Adrenal gland (tissue), 19 donors: ENCODE measurements at regions of chr17 and their contacts with region 1.

Region 1: DNA sequence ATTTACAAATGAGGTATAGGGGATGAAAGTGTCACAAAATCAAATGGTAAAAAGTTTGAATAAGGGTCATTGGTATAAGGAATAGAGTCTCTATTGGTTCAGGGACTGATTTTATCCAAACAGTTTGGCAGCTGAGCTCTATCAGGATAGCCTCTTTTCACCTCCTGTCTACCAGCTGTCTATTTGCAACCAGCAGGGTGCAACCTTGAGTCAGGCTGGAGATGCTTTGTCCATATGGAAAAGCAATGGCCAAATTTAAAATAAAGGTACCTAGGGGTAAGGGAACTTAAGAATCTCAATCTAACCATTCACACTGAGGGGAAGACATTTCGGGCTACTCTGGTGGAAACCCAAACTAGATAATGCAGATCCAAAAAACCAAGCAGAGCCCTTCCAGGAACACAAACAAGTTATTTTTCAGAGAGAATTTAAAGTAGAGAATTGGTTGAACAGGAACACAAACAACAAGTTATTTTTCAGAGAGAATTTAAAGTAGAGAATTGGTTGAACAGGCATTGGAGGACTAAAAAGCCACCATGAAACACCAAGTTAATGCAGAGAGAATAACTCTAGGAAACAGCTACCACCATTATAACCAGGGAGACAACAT is 12.6 kb upstream of the CA10 start:
- DNase-seq: peak; percentile 21 to 74 (median 44)
- H3K4me3 ChIP-seq: no peak overlapping the region
- H3K27ac ChIP-seq: no peak overlapping the region
- H3K4me1 ChIP-seq: no peaks in the 10 kb centered on the region
- H3K27me3 ChIP-seq: no peaks in the 10 kb centered on the region
- CTCF ChIP-seq: peak; percentile 47 to 67 (median 60)
- POLR2A ChIP-seq: no peak

Region 2: GRCh38 chr17:51640108-51640622 is 530.9 kb before region 1 on chr17:
- intact Hi-C with region 1: no loop called
- DNase-seq: peak in 1 of 7 donors; percentile 2
- H3K4me3 ChIP-seq: no peak overlapping the region
- H3K27ac ChIP-seq: no peak overlapping the region
- H3K4me1 ChIP-seq: no peaks in the 10 kb centered on the region
- H3K27me3 ChIP-seq: no peaks in the 10 kb centered on the region
- CTCF ChIP-seq: peak in 2 of 6 experiments; percentile 20 to 23
- POLR2A ChIP-seq: no peak

Region 3: DNA sequence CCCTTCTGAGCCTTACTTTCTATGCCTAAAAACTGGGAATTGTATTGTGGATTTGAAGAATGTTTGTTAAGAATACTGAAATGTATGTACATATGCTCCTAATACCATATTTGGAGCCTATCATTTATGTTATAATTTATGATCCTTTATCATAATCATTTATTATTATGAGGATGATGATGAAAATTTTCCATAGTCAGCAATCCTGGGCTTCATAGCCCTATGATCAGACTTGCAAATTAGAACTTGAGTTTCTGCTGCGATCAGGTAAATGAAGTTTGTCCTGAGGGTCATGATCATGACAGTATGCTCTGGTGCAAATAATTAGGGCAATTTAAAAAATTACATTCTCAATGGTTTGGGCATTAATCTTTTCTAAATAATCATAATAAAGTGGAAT is 160.0 kb before region 1 on chr17:
- intact Hi-C with region 1: no loop called
- DNase-seq: no peak
- H3K4me3 ChIP-seq: no peak overlapping the region
- H3K27ac ChIP-seq: no peak overlapping the region
- H3K4me1 ChIP-seq: no peaks in the 10 kb centered on the region
- H3K27me3 ChIP-seq: no peaks in the 10 kb centered on the region
- CTCF ChIP-seq: no peak
- POLR2A ChIP-seq: no peak

Region 4: GRCh38 chr17:52136166-52136565 is 34.9 kb before region 1 on chr17:
- intact Hi-C with region 1: no loop called
- DNase-seq: no peak
- H3K4me3 ChIP-seq: no peak overlapping the region
- H3K27ac ChIP-seq: no peak overlapping the region
- H3K4me1 ChIP-seq: no peaks in the 10 kb centered on the region
- H3K27me3 ChIP-seq: no peaks in the 10 kb centered on the region
- CTCF ChIP-seq: no peak
- POLR2A ChIP-seq: no peak

Region 5: GRCh38 chr17:52297230-52298010 is 126.4 kb after region 1 on chr17:
- intact Hi-C with region 1: loop called in 1 of 2 experiments (anchors 10 kb)
- DNase-seq: peak in 2 of 7 donors; percentile 24 to 66
- H3K4me3 ChIP-seq: no peak overlapping the region
- H3K27ac ChIP-seq: no peak overlapping the region
- H3K4me1 ChIP-seq: no peaks in the 10 kb centered on the region
- H3K27me3 ChIP-seq: no peaks in the 10 kb centered on the region
- CTCF ChIP-seq: peak in 5 of 6 experiments; percentile 30 to 45 (median 37)
- POLR2A ChIP-seq: no peak